Activated B cell treated with CpG ODN at 0.5 μM for 24 hours (primary cell): ENCODE measurements at regions of chr1 and their contacts with region 1.

Region 1: GRCh38 chr1:70134148-70134547 is 71.2 kb downstream of the LRRC40 start:
- DNase-seq: no peak
- ATAC-seq: no peak
- H3K4me3 Mint-ChIP-seq: no peak overlapping the region
- H3K27ac Mint-ChIP-seq: no peak overlapping the region
- H3K4me1 Mint-ChIP-seq: no peaks in the 10 kb centered on the region
- H3K27me3 Mint-ChIP-seq: no peaks in the 10 kb centered on the region
- CTCF ChIP-seq: no peak

Region 2: GRCh38 chr1:70487910-70488665 is 353.9 kb after region 1 on chr1:
- CTCF ChIA-PET with region 1: no interaction called
- POLR2A ChIA-PET with region 1: no interaction called
- intact Hi-C with region 1: loop called (anchors 1 kb)
- DNase-seq: no peak
- ATAC-seq: no peak
- H3K4me3 Mint-ChIP-seq: no peak overlapping the region
- H3K27ac Mint-ChIP-seq: no peak overlapping the region
- H3K4me1 Mint-ChIP-seq: no peaks in the 10 kb centered on the region
- H3K27me3 Mint-ChIP-seq: peaks cover 8% of the 10 kb centered on the region
- CTCF ChIP-seq: no peak

Region 3: DNA sequence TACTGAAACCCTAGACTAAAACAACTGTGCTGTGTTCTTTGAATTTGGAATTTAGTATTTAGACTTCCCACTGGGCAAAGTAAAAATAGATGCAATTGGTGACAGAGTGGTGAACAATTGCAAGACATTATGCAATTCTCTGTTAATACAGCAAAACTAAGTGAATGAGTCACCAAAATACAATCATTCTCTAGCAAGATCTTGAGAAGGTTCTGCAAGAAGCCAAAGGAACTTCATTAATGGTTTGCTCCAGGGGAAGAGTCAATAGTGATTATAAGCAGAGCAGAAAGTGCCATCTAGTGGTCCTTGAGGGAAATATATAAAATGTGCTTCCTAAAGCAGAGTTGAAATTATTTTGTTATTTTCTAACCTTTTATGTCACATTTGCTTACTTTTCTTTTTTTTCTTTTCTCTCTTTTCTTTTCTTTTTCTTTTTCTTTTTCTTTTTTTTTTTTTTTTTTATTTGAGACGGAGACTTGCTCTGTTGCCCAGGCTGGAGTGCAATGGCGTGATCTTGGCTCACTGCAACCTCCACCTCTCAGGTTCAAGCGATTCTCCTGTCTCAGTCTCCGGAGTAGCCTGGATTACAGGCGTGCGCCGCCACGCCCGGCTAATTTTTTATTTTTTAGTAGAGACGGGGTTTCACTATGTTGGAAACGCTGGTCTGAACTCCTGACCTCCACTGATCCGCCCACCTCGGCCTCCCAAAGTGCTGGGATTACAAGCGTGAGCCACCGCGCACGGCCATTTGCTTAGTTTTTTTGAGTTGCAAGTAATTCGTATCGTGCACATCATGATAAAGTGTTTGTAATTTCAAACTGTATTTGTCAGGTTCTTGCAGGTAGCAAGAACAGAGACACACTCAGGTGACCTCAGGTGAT is 376.1 kb after region 1 on chr1:
- CTCF ChIA-PET with region 1: interaction called, 15 read pairs
- POLR2A ChIA-PET with region 1: no interaction called
- intact Hi-C with region 1: loop called (anchors 1 kb)
- DNase-seq: no peak
- ATAC-seq: no peak
- H3K4me3 Mint-ChIP-seq: no peak overlapping the region
- H3K27ac Mint-ChIP-seq: no peak overlapping the region
- H3K4me1 Mint-ChIP-seq: no peaks in the 10 kb centered on the region
- H3K27me3 Mint-ChIP-seq: peaks cover 13% of the 10 kb centered on the region
- CTCF ChIP-seq: no peak

Region 4: DNA sequence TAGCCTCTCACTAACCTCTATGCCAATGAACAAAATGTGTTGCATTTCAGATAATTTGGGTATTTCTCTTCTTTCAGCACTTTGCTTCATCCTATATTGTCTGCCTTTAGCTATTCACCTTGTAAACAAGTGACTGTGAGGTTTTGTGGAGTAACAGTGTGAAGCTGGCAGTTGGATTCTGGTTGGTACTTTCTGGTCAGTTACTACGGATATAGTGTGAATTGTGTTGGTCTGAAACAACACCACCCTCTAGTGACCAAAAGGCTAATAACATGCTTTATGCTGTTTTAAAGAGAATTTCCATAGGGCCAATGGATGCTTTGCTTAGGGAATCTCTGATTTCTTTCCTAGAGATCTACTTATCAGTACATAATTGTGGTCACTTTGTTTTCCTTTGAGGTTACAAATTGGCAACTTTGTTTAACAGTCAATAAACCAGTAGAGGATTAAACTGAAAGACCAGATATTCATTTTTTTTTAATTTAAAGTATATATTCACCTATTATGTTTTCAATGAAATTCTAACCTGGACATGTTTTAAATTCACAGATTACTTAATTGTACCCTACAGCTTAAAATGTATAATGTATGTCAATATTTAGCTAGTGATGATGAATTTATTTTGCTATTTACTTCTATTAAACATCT is 915.9 kb after region 1 on chr1:
- CTCF ChIA-PET with region 1: no interaction called
- POLR2A ChIA-PET with region 1: no interaction called
- intact Hi-C with region 1: loop called (anchors 1 kb)
- DNase-seq: no peak
- ATAC-seq: peak; percentile 52
- H3K4me3 Mint-ChIP-seq: no peak overlapping the region
- H3K27ac Mint-ChIP-seq: no peak overlapping the region
- H3K4me1 Mint-ChIP-seq: peaks cover 21% of the 10 kb centered on the region
- H3K27me3 Mint-ChIP-seq: peaks cover 34% of the 10 kb centered on the region
- CTCF ChIP-seq: no peak